Dorsolateral prefrontal cortex (tissue), 120 donors: ENCODE measurements at regions of chr17 and their contacts with region 1.

Region 1: DNA sequence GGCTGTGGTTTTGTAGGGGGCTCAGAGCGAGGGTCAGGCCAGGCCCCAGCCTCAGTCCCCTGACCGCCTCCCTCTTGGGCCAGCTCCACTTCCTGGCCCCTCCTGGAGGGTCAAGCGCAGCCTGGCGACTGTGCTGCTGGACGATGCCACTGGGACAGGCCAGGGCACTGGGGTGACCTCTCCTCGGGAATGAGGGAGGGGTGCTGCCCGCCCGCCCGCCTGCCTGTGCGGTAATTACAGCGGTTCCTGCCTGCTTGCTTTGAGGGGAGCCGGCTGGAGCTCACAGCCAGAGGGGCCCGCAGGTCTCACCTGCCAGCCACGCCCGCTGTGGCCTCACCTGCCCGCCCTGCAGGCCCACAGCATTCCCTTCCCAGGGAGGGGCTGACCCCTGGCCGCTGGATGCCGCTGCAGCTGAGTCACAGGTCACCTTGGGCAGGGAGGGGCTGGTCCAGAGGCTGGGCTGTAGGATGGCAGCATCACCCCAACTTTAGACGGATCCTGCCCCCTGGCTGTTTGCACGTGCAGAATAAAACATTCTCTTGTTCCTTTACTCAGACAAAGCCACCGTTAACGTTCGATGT is 76.7 kb upstream of the CBX4 start:
- DNase-seq: peak in 2 of 10 donors; percentile 31 to 53
- H3K4me3 ChIP-seq: no peak overlapping the region
- H3K27ac ChIP-seq: no peak overlapping the region
- H3K27me3 ChIP-seq: peaks cover 0 to 17% (median 0%) of the 10 kb centered on the region in 45 donors
- CTCF ChIP-seq: peak in 47 of 56 donors; percentile 7 to 65 (median 45)

Region 2: DNA sequence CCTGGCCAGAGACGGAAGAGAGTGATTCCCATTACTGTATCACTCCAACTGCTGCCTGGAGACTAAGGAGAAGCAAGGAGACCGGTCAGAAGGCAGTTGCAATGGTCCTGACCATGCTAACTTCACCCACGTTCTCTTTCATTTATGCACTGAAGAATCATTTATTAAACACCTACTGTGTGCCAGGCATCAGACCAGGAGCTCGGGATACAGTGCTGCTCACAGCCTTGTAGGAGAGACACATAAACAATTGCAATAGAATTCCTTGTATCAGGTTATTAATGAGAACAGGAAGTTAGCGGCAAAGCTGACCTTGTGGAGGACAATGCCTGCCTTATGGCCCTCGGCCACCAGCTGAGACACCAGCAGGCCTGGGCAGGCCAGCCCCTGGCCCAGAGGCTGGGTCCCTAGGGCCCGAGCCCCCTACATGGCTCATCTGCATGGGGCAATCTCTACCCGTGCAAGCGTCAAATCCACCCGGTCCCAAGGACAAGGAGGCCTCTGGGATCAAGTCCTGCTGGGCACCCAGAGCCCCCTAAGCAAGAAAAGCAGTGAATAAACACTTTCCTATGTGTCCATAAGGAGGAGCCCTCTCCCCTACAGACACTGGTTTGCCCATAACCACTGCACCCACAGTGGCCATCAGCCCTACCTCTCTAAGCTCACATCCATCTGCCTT is 193.8 kb before region 1 on chr17:
- intact Hi-C with region 1: no loop called
- DNase-seq: no peak
- H3K4me3 ChIP-seq: no peak overlapping the region
- H3K27ac ChIP-seq: no peak overlapping the region
- H3K27me3 ChIP-seq: no peaks in the 10 kb centered on the region
- CTCF ChIP-seq: no peak

Region 3: GRCh38 chr17:79789534-79790353 is 126.2 kb before region 1 on chr17:
- intact Hi-C with region 1: loop called (anchors 5 kb)
- DNase-seq: no peak
- H3K4me3 ChIP-seq: peak overlapping the region in 22 of 59 donors; percentile 5 to 42 (median 21)
- H3K27ac ChIP-seq: no peak overlapping the region
- H3K27me3 ChIP-seq: peaks cover 10 to 97% (median 61%) of the 10 kb centered on the region in 45 donors
- CTCF ChIP-seq: peak; percentile 23 to 94 (median 76)

Region 4: DNA sequence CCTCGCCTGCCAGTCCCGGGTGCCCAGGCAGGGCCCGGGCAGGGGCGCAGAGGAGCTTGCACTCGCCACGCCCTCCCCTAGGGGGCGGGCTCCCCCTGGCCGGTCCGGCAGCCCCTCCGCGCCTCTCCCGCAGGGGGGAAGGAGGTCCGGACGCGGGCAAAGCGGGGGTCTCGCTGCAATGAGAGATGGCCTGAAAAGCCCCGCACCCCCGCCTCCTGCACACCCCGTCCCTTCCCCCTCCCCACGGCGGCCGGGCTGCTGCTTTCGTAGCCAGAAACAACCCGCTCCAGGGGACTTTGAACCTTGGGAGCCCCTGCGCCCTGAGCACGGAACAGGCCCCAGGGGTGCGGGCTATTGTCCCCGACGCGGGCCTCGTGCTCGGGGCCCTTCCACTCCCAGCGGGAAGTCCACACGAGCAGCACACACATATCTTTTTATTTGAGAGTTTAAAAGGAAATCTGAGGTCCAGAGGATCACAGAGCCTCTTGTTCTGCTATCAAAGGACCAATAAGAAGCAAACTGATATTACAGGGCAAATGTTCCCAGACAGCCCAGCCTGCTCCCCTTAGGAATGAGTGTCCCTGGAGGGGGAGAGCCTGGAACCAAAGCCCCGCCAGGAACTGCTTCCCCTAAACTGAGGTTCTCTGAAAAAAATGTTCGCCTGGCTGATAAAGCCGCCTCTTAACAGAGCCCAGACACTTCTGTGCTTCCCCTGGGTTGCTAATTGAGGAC is 70.9 kb before region 1 on chr17:
- intact Hi-C with region 1: loop called (anchors 2 to 5 kb)
- DNase-seq: peak in 1 of 10 donors; percentile 70
- H3K4me3 ChIP-seq: peak overlapping the region in 58 of 59 donors; percentile 33 to 75 (median 61)
- H3K27ac ChIP-seq: peak overlapping the region in 48 of 59 donors; percentile 5 to 78 (median 48)
- H3K27me3 ChIP-seq: peaks cover 14 to 68% (median 40%) of the 10 kb centered on the region in 45 donors
- CTCF ChIP-seq: peak; percentile 38 to 85 (median 73)

Region 5: DNA sequence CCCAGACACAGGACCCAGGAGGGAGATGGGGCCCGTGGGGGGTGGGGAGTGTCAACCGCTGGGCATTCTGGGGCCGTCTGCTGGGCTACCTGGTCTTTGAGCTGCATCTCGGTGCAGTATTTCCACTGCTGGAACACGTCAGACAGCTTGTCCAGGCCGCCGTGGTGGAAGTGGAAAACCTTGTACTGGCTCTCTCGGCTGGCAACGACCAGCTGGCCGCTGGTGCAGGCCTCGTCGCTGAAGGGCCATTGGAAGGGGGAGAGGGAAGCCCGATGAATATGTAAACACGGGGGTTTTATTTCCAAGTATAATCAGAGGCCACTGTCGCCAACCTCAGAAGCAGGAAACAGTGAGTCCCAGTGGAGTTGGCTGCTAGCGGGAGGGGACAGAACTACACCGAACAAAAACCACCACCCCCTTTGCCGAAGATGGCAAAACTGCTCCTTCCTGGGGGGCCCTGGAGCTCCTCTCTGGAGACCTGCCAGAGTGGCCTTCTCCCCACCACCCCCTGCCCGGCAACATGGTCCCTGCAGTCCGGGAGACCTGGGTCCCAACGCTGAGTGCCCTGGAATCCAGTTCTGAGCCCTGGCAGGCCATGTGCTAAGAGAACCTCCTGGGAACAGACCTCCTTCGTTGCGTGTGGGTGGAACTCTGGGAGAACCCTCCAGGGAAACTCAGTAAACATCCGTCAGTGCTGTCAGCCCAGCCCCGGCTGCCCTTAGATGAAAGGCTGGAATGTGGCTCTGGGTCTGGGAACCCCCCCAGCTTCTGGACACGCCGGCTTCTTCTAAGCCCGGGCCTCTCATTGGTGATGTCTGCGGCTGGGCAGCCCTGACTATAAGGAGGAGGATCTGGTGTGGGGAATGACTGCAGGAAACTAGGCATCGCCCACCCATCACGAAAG is 35.7 kb after region 1 on chr17:
- intact Hi-C with region 1: loop called in 1 of 2 experiments (anchors 2 kb)
- DNase-seq: peak in 9 of 10 donors; percentile 45 to 77 (median 66)
- H3K4me3 ChIP-seq: peak overlapping the region in 58 of 59 donors; percentile 0 to 65 (median 39)
- H3K27ac ChIP-seq: peak overlapping the region; percentile 30 to 95 (median 86)
- H3K27me3 ChIP-seq: no peaks in the 10 kb centered on the region
- CTCF ChIP-seq: peak in 9 of 56 donors; percentile 5 to 31 (median 10)

Region 6: GRCh38 chr17:79991140-79991923 is 75.4 kb after region 1 on chr17:
- intact Hi-C with region 1: loop called in 1 of 2 experiments (anchors 5 kb)
- DNase-seq: peak; percentile 81 to 91 (median 87)
- H3K4me3 ChIP-seq: peak overlapping the region; percentile 45 to 74 (median 65)
- H3K27ac ChIP-seq: peak overlapping the region in 16 of 59 donors; percentile 9 to 77 (median 52)
- H3K27me3 ChIP-seq: no peaks in the 10 kb centered on the region
- CTCF ChIP-seq: peak; percentile 38 to 89 (median 76)

Region 7: GRCh38 chr17:80124351-80124981 is 208.5 kb after region 1 on chr17:
- intact Hi-C with region 1: no loop called
- DNase-seq: no peak
- H3K4me3 ChIP-seq: no peak overlapping the region
- H3K27ac ChIP-seq: no peak overlapping the region
- H3K27me3 ChIP-seq: no peaks in the 10 kb centered on the region
- CTCF ChIP-seq: peak in 1 of 56 donors; percentile 8